Ascending aorta (tissue), 2 donors: ENCODE measurements at regions of chr2 and their contacts with region 1.

Region 1: DNA sequence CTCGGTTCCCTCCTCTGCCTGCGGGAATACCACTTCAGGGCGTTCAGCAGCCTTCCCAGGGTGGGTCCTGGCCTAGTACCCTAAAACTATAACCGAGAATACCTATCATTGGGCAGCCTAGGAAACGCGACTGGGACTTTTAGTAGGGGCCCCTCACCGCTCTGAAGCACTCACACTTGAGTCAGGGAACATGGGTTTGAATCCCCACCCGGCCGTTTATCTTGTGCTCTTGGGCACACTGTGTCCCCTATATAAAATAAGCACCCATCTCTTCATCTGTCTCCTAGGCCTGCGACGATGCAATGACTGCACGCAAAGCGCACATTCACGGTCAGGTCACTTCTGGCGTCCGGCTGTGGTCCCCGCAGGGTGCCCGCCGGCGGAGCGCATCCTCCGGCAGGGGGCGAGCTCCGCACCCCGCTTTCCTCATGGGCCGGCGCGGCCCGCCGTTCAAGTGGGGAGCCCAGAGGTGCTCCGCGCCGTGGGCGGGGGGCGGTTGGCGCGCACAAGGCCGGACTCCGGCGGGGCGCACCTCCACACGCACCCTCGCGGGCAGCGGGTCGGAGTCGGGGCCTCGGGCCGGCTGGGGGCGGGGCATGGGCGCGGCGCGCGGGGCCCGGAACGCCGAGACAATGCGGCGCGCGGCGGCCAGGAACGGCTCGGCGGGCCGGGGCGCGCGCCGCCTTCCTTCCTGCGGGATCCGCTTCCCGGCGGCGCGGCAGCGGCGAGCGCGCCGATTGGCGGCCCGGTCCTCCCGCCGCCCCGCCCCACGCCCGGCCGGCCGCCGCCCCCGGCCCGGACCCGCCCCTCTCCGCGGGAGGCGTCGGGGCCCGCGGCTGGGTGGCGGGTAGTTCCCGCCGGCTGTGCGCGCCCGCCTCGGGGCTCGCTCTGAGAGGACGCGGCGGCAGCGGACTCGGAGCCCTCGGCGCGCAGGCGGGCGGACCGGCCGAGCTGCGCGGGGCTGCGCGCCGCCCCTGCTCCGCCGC is at the start of gene ASAP2:
- DNase-seq: peak in 1 of 2 donors; percentile 82
- H3K4me3 ChIP-seq: peak within 1 kb of the TSS; percentile 79 to 81
- H3K27ac ChIP-seq: peak within 1 kb of the TSS; percentile 95 to 98
- H3K4me1 ChIP-seq: peaks cover 0 to 18% of the 10 kb centered on the region in 2 donors
- H3K27me3 ChIP-seq: no peaks in the 10 kb centered on the region
- CTCF ChIP-seq: peak; percentile 54 to 85 (median 81)
- total RNA-seq, gene ASAP2: 56.9 TPM

Region 2: GRCh38 chr2:9165625-9166024 is 40.6 kb before region 1 on chr2:
- intact Hi-C with region 1: loop called (anchors 5 kb)
- DNase-seq: no peak
- H3K4me3 ChIP-seq: no peak overlapping the region
- H3K27ac ChIP-seq: peak overlapping the region; percentile 41 to 81
- H3K4me1 ChIP-seq: peaks cover 13 to 18% of the 10 kb centered on the region in 2 donors
- H3K27me3 ChIP-seq: no peaks in the 10 kb centered on the region
- CTCF ChIP-seq: no peak

Region 3: GRCh38 chr2:9234680-9235387 is 28.6 kb after region 1 on chr2:
- intact Hi-C with region 1: loop called (anchors 1 kb)
- DNase-seq: peak in 1 of 2 donors; percentile 82
- H3K4me3 ChIP-seq: peak overlapping the region in 1 of 2 donors; percentile 36
- H3K27ac ChIP-seq: peak overlapping the region; percentile 92 to 97
- H3K4me1 ChIP-seq: peaks cover 37 to 97% of the 10 kb centered on the region in 2 donors
- H3K27me3 ChIP-seq: no peaks in the 10 kb centered on the region
- CTCF ChIP-seq: no peak

Region 4: DNA sequence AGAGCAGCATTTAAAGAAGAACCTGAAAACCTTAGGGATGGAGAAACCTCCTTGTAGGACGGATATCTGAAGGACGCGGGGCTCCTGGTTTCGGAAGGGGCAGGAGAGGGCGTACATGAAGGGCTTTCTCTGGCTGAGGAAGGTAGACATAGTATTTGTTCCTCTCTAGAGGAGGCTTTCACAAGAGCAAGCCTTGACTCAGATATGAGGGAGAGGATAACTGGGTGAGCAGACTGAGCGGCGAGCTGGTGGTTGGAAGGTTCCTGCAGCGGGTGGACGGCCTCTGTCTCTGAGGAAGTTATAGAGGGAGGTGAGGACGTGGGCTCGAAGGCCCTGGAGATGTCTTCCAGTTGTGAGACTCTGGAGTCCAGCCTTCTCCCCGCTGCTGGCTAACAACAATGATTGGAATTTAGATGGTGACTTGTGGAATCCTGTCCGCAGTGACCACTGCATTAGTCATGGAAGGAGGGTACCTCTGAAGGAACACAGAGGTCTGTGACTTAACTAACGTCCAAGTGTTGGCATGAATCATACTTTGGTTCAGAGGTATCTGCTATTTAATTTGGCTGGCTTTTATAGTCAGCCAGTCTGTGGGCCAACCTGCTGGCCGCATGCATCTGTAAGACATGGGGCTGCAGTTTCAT is 81.3 kb after region 1 on chr2:
- intact Hi-C with region 1: loop called (anchors 5 kb)
- DNase-seq: peak in 1 of 2 donors; percentile 86
- H3K4me3 ChIP-seq: no peak overlapping the region
- H3K27ac ChIP-seq: peak overlapping the region; percentile 74 to 76
- H3K4me1 ChIP-seq: peaks cover 11 to 39% of the 10 kb centered on the region in 2 donors
- H3K27me3 ChIP-seq: no peaks in the 10 kb centered on the region
- CTCF ChIP-seq: no peak

Region 5: GRCh38 chr2:9347411-9347881 is 141.2 kb after region 1 on chr2:
- intact Hi-C with region 1: loop called (anchors 5 kb)
- DNase-seq: peak in 1 of 2 donors; percentile 90
- H3K4me3 ChIP-seq: peak overlapping the region in 1 of 2 donors; percentile 4
- H3K27ac ChIP-seq: peak overlapping the region; percentile 73 to 78
- H3K4me1 ChIP-seq: peaks cover 0 to 14% of the 10 kb centered on the region in 2 donors
- H3K27me3 ChIP-seq: no peaks in the 10 kb centered on the region
- CTCF ChIP-seq: no peak